ENCODE measurements at regions of chr5 and their contacts with region 1.

Region 1: DNA sequence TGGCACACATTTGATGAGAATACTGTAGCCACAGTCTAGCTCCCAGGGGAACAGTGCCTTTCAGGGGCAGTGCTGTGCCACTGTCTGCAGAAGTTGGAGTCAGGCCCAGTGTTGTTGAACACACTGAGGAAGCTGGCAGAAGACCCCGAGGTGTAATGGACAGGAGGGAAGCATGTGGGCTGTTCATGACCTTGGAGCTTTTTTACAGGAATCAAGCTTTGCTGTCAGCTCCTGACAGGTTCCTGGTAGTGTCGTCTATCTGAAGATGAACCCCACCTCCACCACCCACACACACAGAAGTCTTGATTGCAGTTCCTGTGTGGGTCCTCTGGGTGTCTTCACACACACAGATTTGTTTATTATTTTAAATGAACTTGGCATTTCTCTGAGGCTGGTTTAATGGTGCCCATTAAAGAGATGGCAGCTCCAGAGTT is 40.3 kb upstream of the TNFAIP8 start:
- DNase-seq: peak; percentile 78
- H3K4me3 Mint-ChIP-seq: peak overlapping the region; percentile 30
- H3K27ac Mint-ChIP-seq: peak overlapping the region; percentile 89
- H3K4me1 Mint-ChIP-seq: peaks cover 93% of the 10 kb centered on the region
- H3K27me3 Mint-ChIP-seq: no peaks in the 10 kb centered on the region

Region 2: DNA sequence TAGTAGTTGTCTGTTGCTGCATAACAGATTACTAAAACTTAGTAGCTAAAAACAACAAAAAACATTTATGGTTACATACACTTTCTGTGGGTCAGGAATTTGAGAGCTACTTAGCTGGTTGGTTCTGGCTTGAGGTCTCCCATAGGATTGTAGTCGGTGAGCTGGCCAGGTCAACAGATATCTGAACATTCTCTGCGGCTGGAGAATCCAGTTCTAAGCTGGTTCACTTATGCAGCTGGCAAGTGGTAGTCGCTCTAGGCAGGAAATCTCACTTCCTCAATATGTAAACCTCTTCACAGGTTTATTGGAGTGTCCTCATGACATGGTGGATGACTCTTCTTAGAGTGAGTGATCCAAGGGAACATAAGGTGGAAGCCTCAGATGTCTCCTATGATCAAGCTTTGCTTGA is 25.4 kb before region 1 on chr5:
- CTCF ChIA-PET with region 1: interaction called, 13 read pairs
- POLR2A ChIA-PET with region 1: interaction called, 8 read pairs
- intact Hi-C with region 1: no loop called
- DNase-seq: no peak
- H3K4me3 Mint-ChIP-seq: peak overlapping the region; percentile 28
- H3K27ac Mint-ChIP-seq: peak overlapping the region; percentile 93
- H3K4me1 Mint-ChIP-seq: peaks cover 86% of the 10 kb centered on the region
- H3K27me3 Mint-ChIP-seq: no peaks in the 10 kb centered on the region

Region 3: GRCh38 chr5:119328753-119329602 is 13.4 kb after region 1 on chr5:
- CTCF ChIA-PET with region 1: interaction called, 45 read pairs
- POLR2A ChIA-PET with region 1: interaction called, 4 read pairs
- intact Hi-C with region 1: loop called (anchors 1 kb)
- DNase-seq: peak; percentile 76
- H3K4me3 Mint-ChIP-seq: peak overlapping the region; percentile 35
- H3K27ac Mint-ChIP-seq: peak overlapping the region; percentile 96
- H3K4me1 Mint-ChIP-seq: peaks cover 95% of the 10 kb centered on the region
- H3K27me3 Mint-ChIP-seq: no peaks in the 10 kb centered on the region

Region 4: DNA sequence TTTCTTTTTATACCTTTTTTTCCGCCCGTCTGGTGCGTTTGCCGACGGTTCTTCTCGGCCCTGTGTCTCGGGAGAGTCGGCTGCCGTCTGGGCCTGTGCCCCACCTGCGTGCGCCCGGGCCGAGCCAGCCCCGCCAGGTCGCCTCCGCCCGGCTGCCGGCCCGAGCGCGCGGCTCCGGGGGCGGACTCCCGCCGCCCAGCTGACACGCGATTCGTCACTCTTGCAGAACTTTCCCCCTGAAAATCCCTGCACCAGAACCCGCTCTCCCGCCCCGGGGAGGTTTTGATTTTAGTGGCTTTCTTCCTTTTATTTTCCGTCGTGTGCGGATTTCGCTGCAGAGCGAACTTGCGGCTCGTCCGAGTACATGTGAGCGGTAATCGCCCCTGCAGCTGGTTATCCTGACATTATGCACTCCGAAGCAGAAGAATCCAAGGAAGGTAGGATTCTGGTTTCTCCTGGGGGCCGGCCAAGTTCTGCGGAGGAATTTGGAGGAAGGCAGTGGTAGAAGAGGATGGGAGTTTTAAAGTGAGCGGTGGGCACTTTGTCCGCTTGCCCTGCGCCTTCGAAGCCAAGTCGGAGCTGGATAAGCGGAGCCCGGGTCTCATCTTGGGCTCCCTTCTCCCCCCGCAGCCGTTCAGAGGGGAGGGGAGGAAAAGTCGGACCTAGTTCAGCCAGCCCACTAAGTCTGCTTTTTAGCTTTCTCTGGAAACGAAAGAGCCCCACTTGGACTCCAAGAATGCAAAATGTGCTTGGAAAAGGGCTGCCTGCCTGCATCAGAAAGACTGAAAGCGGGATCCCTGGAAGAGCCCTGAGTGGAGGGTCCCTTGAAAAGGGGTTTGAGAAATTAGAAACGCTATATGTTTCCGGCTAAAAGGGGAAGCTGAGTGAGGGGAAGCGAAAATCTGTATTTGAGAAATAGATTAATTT is 40.4 kb after region 1 on chr5 and contains the start of gene TNFAIP8:
- CTCF ChIA-PET with region 1: interaction called, 12 read pairs
- POLR2A ChIA-PET with region 1: interaction called, 3 read pairs
- intact Hi-C with region 1: no loop called
- DNase-seq: peak; percentile 90
- H3K4me3 Mint-ChIP-seq: peak within 1 kb of the TSS; percentile 99
- H3K27ac Mint-ChIP-seq: peak within 1 kb of the TSS; percentile 90
- H3K4me1 Mint-ChIP-seq: peaks cover 71% of the 10 kb centered on the region
- H3K27me3 Mint-ChIP-seq: no peaks in the 10 kb centered on the region
- total RNA-seq, gene TNFAIP8: 153 to 159 TPM

Region 5: GRCh38 chr5:119367502-119368237 is 52.1 kb after region 1 on chr5:
- CTCF ChIA-PET with region 1: interaction called, 12 read pairs
- POLR2A ChIA-PET with region 1: interaction called, 3 read pairs
- intact Hi-C with region 1: no loop called
- DNase-seq: no peak
- H3K4me3 Mint-ChIP-seq: peak overlapping the region; percentile 55
- H3K27ac Mint-ChIP-seq: peak overlapping the region; percentile 90
- H3K4me1 Mint-ChIP-seq: peaks cover 83% of the 10 kb centered on the region
- H3K27me3 Mint-ChIP-seq: no peaks in the 10 kb centered on the region